ENCODE measurements at regions of chr6 and their contacts with region 1.

Region 1: DNA sequence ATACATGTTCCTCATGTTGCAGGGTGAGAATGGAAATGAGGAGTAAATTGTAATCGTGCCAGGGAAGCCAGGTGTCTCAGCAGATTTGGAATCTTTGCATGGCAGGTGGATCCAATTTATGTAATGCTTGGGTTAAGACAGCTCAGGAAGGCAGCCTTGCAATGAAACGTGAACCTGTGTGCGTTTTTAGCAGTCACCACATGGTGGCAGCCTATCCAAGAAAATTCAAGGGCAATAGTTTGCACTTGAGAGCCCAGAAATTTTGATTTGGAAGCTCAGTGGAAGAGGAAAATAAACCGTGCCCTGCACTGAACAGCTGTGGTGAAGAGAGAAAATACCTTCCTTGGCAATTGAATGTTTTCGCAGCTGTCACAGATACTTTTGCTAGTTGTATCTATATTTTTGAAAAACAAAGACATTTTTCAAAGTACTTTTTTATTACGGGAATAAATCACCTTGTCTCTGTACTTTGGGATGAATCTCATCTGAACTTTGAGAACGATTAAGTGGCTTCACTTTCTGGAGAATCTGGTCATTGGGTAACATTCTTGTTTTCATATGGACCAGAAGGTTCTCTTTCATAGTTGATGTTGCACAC is 26.5 kb downstream of the MTHFD1L start:
- DNase-seq: peak; percentile 45
- H3K4me3 Mint-ChIP-seq: no peak overlapping the region
- H3K27ac Mint-ChIP-seq: no peak overlapping the region
- H3K4me1 Mint-ChIP-seq: peaks cover 24% of the 10 kb centered on the region
- H3K27me3 Mint-ChIP-seq: no peaks in the 10 kb centered on the region

Region 2: GRCh38 chr6:150560004-150560883 is 331.7 kb before region 1 on chr6:
- intact Hi-C with region 1: no loop called
- DNase-seq: no peak
- H3K4me3 Mint-ChIP-seq: no peak overlapping the region
- H3K27ac Mint-ChIP-seq: no peak overlapping the region
- H3K4me1 Mint-ChIP-seq: no peaks in the 10 kb centered on the region
- H3K27me3 Mint-ChIP-seq: no peaks in the 10 kb centered on the region

Region 3: DNA sequence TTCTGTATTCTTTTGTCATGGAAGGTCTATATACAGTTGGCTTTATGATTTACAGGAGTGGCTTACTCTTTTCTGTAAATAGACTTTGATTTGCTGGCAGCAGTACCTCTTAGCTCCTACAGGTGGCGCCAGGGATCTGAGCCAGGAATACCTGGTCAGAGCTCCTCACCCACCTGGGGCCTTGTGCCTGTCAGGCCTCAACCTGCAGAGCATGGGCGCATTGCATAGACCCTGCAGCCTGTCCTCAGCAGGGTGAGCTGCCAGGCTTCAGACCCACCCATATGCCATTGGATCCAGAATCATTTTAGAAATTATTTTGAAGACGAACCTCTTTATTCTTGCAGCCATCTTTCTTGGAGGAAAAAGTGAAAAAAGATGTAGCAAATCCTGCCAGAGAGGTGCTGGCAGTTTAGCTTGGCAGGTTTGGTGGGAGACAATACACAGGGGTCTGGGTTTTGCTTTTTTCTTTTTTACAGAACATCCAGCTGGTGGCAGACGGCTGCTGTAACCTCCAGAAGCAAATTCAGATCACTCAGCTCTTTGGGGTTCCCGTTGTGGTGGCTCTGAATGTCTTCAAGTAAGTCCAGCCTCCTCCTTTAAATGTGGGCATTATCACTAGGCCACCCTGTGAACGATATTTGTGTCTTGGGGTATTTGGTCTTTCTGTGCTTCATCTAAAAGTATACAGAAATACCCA is 122.6 kb after region 1 on chr6:
- intact Hi-C with region 1: loop called (anchors 5 kb)
- DNase-seq: peak; percentile 37
- H3K4me3 Mint-ChIP-seq: no peak overlapping the region
- H3K27ac Mint-ChIP-seq: no peak overlapping the region
- H3K4me1 Mint-ChIP-seq: peaks cover 10% of the 10 kb centered on the region
- H3K27me3 Mint-ChIP-seq: no peaks in the 10 kb centered on the region

Measured in activated T-helper 1 cell treated with anti-CD3 and anti-CD28 coated beads, Interleukin-12 subunit alpha, Interleukin-12 subunit beta, Interleukin-2, Interleukin-4 antibody, amounts not matched to agents 30 ng/mL and 10 ng/mL and 1 ng/mL, durations not matched to agents 14 hours and 24 hours and 36 hours (primary cell).